H1 (cell line): ENCODE measurements at regions of chr2 and their contacts with region 1.

Region 1: GRCh38 chr2:189142893-189143759 is 36.4 kb downstream of the COL5A2 start:
- DNase-seq: peak; percentile 17 to 63
- H3K4me3 ChIP-seq: no peak overlapping the region
- H3K27ac ChIP-seq: no peak overlapping the region
- H3K4me1 ChIP-seq: peaks cover 0 to 2% (median 0%) of the 10 kb centered on the region in 4 experiments; a peak in 1 of 7 replicates
- H3K27me3 ChIP-seq: no peaks in the 10 kb centered on the region
- CTCF ChIP-seq: peak; percentile 32 to 100 (median 95)
- EP300 ChIP-seq: no peak
- POLR2A ChIP-seq: no peak
- RAD21 ChIP-seq: peak; percentile 74 to 86

Region 2: GRCh38 chr2:189096769-189097447 is 46.2 kb before region 1 on chr2:
- CTCF ChIA-PET with region 1: interaction called, 12 read pairs
- POLR2A ChIA-PET with region 1: no interaction called
- DNase-seq: no peak
- H3K4me3 ChIP-seq: no peak overlapping the region
- H3K27ac ChIP-seq: no peak overlapping the region
- H3K4me1 ChIP-seq: no peaks in the 10 kb centered on the region
- H3K27me3 ChIP-seq: peaks cover 0 to 1% (median 0%) of the 10 kb centered on the region in 4 experiments; a peak in 1 of 7 replicates
- CTCF ChIP-seq: no peak
- EP300 ChIP-seq: no peak
- POLR2A ChIP-seq: no peak
- RAD21 ChIP-seq: no peak

Region 3: DNA sequence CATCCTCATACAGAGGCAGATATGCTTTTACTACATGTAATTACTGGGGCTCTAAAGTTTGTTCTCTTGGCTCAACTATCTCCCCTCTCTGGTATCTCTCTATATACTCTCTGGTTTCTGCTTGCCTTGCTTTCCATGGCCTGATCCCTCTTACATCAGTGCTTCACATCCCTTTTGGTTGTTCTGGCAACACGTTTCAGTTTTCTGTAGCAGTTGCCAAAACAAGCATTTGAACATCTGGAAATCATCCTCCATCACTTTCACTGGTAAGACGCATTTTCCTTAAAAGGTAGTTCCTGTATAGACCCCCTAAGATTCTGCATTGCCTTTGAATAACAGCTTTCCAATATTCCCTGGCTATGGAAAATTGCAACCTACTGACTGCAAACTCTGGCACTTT is 10.5 kb after region 1 on chr2:
- CTCF ChIA-PET with region 1: interaction called, 12 read pairs
- POLR2A ChIA-PET with region 1: no interaction called
- DNase-seq: no peak
- H3K4me3 ChIP-seq: no peak overlapping the region
- H3K27ac ChIP-seq: no peak overlapping the region
- H3K4me1 ChIP-seq: no peaks in the 10 kb centered on the region
- H3K27me3 ChIP-seq: no peaks in the 10 kb centered on the region
- CTCF ChIP-seq: no peak
- EP300 ChIP-seq: no peak
- POLR2A ChIP-seq: no peak
- RAD21 ChIP-seq: no peak

Region 4: GRCh38 chr2:189164746-189165145 is 21.6 kb after region 1 on chr2:
- CTCF ChIA-PET with region 1: interaction called, 29 read pairs
- POLR2A ChIA-PET with region 1: no interaction called
- DNase-seq: no peak
- H3K4me3 ChIP-seq: no peak overlapping the region
- H3K27ac ChIP-seq: no peak overlapping the region
- H3K4me1 ChIP-seq: peaks cover 0 to 12% (median 2%) of the 10 kb centered on the region in 4 experiments; a peak in 2 of 7 replicates
- H3K27me3 ChIP-seq: no peaks in the 10 kb centered on the region
- CTCF ChIP-seq: no peak
- EP300 ChIP-seq: no peak
- POLR2A ChIP-seq: no peak
- RAD21 ChIP-seq: no peak

Region 5: GRCh38 chr2:189217541-189217940 is 74.4 kb after region 1 on chr2:
- CTCF ChIA-PET with region 1: interaction called, 21 read pairs
- POLR2A ChIA-PET with region 1: no interaction called
- DNase-seq: peak; percentile 60 to 77
- H3K4me3 ChIP-seq: no peak overlapping the region; a peak in 1 of 8 replicates
- H3K27ac ChIP-seq: peak overlapping the region; percentile 69
- H3K4me1 ChIP-seq: peaks cover 2 to 11% (median 7%) of the 10 kb centered on the region in 4 experiments; a peak in 4 of 7 replicates
- H3K27me3 ChIP-seq: no peaks in the 10 kb centered on the region
- CTCF ChIP-seq: no peak
- EP300 ChIP-seq: peak in 1 of 2 experiments; percentile 69; a peak in 1 of 3 replicates
- POLR2A ChIP-seq: peak in 1 of 2 experiments; percentile 47; a peak in 1 of 3 replicates
- RAD21 ChIP-seq: no peak

Region 6: DNA sequence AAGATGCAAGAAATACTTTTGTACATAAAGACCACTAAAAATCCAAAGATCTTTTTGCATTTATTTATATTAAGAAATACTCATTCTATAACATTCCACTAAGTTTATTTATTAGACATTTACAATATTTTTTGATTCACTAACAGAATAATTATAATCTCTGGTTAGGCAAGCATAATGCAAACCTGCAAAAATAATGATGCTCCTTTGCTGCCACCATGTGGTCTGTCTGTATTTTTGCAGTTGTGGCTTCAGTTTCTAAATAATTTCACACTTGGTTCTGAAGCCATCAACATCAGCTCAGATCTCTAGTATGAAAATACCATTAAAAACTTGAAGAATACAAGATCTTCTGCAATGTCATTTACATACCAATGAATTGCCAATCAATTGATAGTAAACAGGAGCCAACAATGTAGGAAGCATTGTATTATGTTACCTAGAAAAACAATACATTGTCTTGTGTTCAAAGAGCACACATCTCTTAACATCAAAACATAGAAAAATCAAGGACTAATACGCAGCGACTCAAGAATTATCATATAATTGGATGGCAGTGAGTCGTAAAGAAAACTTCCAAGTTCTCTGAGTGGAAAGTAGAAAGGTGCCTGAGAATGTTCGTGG is 269.3 kb after region 1 on chr2:
- CTCF ChIA-PET with region 1: interaction called, 23 read pairs
- POLR2A ChIA-PET with region 1: no interaction called
- DNase-seq: peak in 1 of 2 experiments; percentile 56
- H3K4me3 ChIP-seq: no peak overlapping the region
- H3K27ac ChIP-seq: no peak overlapping the region
- H3K4me1 ChIP-seq: no peaks in the 10 kb centered on the region
- H3K27me3 ChIP-seq: no peaks in the 10 kb centered on the region
- CTCF ChIP-seq: peak in 2 of 3 experiments; percentile 64 to 68; a peak in 3 of 4 replicates
- EP300 ChIP-seq: no peak
- POLR2A ChIP-seq: no peak
- RAD21 ChIP-seq: peak; percentile 91 to 92